Heart right ventricle (tissue), 16 donors: ENCODE measurements at regions of chr3 and their contacts with region 1.

Region 1: GRCh38 chr3:71397046-71397445 is 186.5 kb downstream of the FOXP1 start:
- DNase-seq: peak in 1 of 2 donors; percentile 35
- ATAC-seq: no peak
- H3K4me3 ChIP-seq: no peak overlapping the region
- H3K27ac ChIP-seq: no peak overlapping the region
- H3K4me1 ChIP-seq: peaks cover 0 to 51% (median 20%) of the 10 kb centered on the region in 9 donors
- H3K27me3 ChIP-seq: no peaks in the 10 kb centered on the region
- CTCF ChIP-seq: peak; percentile 20 to 64 (median 53)

Region 2: DNA sequence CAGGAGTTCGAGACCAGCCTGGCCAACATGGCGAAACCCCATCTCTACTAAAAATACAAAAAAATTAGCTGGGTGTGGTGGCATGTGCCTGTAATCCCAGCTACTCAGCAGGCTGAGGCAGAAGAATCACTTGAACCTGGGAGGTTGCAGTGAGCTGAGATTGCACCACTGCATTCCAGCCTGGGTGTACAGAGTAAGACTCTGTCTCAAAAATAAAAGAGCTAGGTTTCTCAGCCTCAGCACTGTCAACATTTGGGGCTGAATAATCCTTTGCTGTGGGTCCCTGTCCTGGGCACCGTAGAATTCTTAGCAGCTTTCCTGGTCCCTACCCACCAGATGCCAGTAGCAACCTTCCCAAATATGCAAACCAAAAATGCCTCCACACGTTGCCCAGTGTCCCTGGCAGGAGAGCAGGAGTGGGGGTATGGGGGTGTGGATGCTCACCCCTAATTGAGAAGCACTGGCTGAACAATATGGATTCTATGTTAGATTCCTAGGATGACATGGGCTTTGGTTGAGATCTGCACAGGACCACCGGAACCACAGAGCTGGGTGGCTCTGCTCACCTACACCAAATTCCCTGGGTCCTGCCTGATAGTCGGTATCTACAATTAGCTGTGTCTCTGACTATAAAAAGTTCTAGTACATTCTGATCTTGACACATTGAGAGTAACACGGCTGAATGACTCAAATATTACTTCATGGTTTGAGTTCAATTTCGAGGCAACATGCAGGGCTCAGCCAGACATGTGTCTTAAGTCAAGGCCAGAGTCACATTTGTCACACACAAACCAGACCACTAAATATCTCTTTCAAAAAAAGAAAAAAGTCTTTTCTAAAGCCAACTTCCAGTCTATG is 507.7 kb before region 1 on chr3:
- intact Hi-C with region 1: no loop called
- DNase-seq: no peak
- ATAC-seq: peak; percentile 17 to 97 (median 78)
- H3K4me3 ChIP-seq: no peak overlapping the region
- H3K27ac ChIP-seq: peak overlapping the region in 5 of 10 donors; percentile 16 to 45 (median 40)
- H3K4me1 ChIP-seq: peaks cover 0 to 13% (median 12%) of the 10 kb centered on the region in 9 donors
- H3K27me3 ChIP-seq: no peaks in the 10 kb centered on the region
- CTCF ChIP-seq: no peak

Region 3: GRCh38 chr3:71076361-71077002 is 320.6 kb before region 1 on chr3:
- intact Hi-C with region 1: no loop called
- DNase-seq: no peak
- ATAC-seq: no peak
- H3K4me3 ChIP-seq: no peak overlapping the region
- H3K27ac ChIP-seq: no peak overlapping the region
- H3K4me1 ChIP-seq: peaks cover 0 to 48% (median 34%) of the 10 kb centered on the region in 9 donors
- H3K27me3 ChIP-seq: no peaks in the 10 kb centered on the region
- CTCF ChIP-seq: no peak

Region 4: GRCh38 chr3:71322154-71322553 is 74.9 kb before region 1 on chr3:
- intact Hi-C with region 1: loop called in 2 of 10 experiments (anchors 10 kb)
- DNase-seq: no peak
- ATAC-seq: no peak
- H3K4me3 ChIP-seq: no peak overlapping the region
- H3K27ac ChIP-seq: no peak overlapping the region
- H3K4me1 ChIP-seq: peaks cover 0 to 9% (median 0%) of the 10 kb centered on the region in 9 donors
- H3K27me3 ChIP-seq: no peaks in the 10 kb centered on the region
- CTCF ChIP-seq: no peak

Region 5: DNA sequence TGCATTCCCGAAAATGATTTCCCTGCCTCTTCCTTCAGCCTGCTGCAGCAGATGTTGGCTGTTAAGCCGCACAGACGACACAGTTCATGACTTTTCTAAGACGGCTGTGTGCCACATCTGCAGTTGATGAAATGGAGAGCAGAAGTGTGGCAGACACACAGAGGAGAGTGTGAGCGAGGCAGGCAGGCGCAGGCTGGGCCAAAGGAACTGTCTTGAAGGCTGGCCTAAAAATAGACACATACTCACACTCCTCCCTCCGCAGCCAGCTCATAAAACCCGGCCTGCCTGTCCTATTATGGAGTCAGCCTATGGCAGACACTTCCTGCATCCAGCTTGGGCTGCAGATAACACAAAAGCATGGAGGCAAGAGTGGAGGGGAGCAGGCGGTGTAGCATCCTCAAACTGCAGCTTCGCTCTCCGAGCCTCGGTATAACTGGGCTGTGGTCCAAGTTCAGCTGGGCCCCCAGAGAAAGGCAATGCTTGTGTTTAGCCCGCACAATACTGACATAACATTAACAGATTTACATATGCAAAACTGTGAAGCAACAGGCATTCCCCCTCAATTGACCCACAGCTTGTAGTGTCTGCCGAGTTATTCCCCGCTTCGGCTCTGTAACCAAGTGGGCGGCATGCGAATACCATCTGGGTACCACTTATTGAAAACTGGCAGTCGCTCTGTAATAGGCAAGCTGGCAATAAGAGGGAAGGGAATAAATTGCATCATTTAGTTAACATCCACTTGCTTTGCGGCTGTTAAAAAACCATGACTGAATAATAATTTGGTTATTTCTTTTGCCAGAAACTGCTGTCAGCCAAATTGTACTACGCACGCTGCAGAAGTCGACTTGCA is 145.7 kb after region 1 on chr3:
- intact Hi-C with region 1: no loop called
- DNase-seq: peak; percentile 75 to 83
- ATAC-seq: peak; percentile 95 to 100 (median 98)
- H3K4me3 ChIP-seq: peak overlapping the region in 6 of 10 donors; percentile 18 to 34 (median 29)
- H3K27ac ChIP-seq: peak overlapping the region in 7 of 10 donors; percentile 9 to 68 (median 63)
- H3K4me1 ChIP-seq: peaks cover 5 to 56% (median 22%) of the 10 kb centered on the region in 9 donors
- H3K27me3 ChIP-seq: no peaks in the 10 kb centered on the region
- CTCF ChIP-seq: no peak